ENCODE measurements at regions of chr16 and their contacts with region 1.

Region 1: DNA sequence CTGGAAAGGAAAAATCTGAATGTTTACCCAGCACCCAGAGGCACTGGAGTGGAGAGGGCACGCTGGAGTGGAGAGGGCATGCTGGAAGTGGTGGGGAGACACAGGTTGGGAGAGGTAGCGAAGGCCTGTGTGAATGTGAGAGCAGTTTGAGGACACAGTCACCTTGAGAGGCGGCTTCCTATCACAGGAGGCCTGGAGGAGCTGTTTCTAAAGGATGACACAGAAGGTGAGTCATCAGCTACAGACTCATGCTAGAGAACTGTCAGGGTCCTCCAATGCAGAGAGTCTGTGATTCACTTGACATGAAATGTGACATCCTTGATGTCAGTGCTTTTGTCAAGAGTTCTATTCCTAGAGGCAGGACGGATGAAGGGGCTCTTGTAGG is 13.8 kb downstream of the CTRL start:
- DNase-seq: peak in 3 of 14 experiments; percentile 22 to 46 (median 28)
- ATAC-seq: no peak
- H3K4me3 ChIP-seq: no peak overlapping the region
- H3K4me3 Mint-ChIP-seq: no peak overlapping the region
- H3K27ac ChIP-seq: no peak overlapping the region
- H3K27ac Mint-ChIP-seq: no peak overlapping the region
- H3K4me1 ChIP-seq: peaks cover 11% of the 10 kb centered on the region
- H3K4me1 Mint-ChIP-seq: peaks cover 20% of the 10 kb centered on the region
- H3K27me3 ChIP-seq: no peaks in the 10 kb centered on the region
- H3K27me3 Mint-ChIP-seq: no peaks in the 10 kb centered on the region
- CTCF ChIP-seq: no peak

Region 2: GRCh38 chr16:67736858-67737257 is 181.0 kb before region 1 on chr16:
- CTCF ChIA-PET with region 1: no interaction called
- POLR2A ChIA-PET with region 1: no interaction called
- intact Hi-C with region 1: loop called in 1 of 2 experiments (anchors 10 kb)
- DNase-seq: no peak
- ATAC-seq: no peak
- H3K4me3 ChIP-seq: no peak overlapping the region
- H3K4me3 Mint-ChIP-seq: no peak overlapping the region
- H3K27ac ChIP-seq: no peak overlapping the region
- H3K27ac Mint-ChIP-seq: peak overlapping the region; percentile 27
- H3K4me1 ChIP-seq: no peaks in the 10 kb centered on the region
- H3K4me1 Mint-ChIP-seq: no peaks in the 10 kb centered on the region
- H3K27me3 ChIP-seq: no peaks in the 10 kb centered on the region
- H3K27me3 Mint-ChIP-seq: no peaks in the 10 kb centered on the region
- CTCF ChIP-seq: no peak

Region 3: GRCh38 chr16:68064791-68065365 is 147.0 kb after region 1 on chr16:
- CTCF ChIA-PET with region 1: no interaction called
- POLR2A ChIA-PET with region 1: no interaction called
- intact Hi-C with region 1: no loop called
- DNase-seq: peak; percentile 55 to 82 (median 68)
- ATAC-seq: peak; percentile 83
- H3K4me3 ChIP-seq: no peak overlapping the region
- H3K4me3 Mint-ChIP-seq: peak overlapping the region; percentile 22
- H3K27ac ChIP-seq: peak overlapping the region in 1 of 2 donors; percentile 55
- H3K27ac Mint-ChIP-seq: peak overlapping the region; percentile 50
- H3K4me1 ChIP-seq: peaks cover 86% of the 10 kb centered on the region
- H3K4me1 Mint-ChIP-seq: peaks cover 84% of the 10 kb centered on the region
- H3K27me3 ChIP-seq: no peaks in the 10 kb centered on the region
- H3K27me3 Mint-ChIP-seq: no peaks in the 10 kb centered on the region
- CTCF ChIP-seq: peak; percentile 87